Caco-2 (cell line): ENCODE measurements at regions of chr13 and their contacts with region 1.

Region 1: GRCh38 chr13:21603531-21604448 is at the start of gene MICU2:
- DNase-seq: peak; percentile 96 to 97
- H3K4me3 ChIP-seq: peak within 1 kb of the TSS; percentile 84
- H3K4me3 Mint-ChIP-seq: peak within 1 kb of the TSS; percentile 83
- H3K27ac Mint-ChIP-seq: peak within 1 kb of the TSS; percentile 76
- H3K4me1 ChIP-seq: no peaks in the 10 kb centered on the region
- H3K4me1 Mint-ChIP-seq: peaks cover 16% of the 10 kb centered on the region
- H3K27me3 ChIP-seq: no peaks in the 10 kb centered on the region
- H3K27me3 Mint-ChIP-seq: peaks cover 4% of the 10 kb centered on the region
- CTCF ChIP-seq: no peak
- total RNA-seq, gene MICU2: 43.1 and 47.6 TPM in 2 replicates

Region 2: GRCh38 chr13:21511849-21512248 is 91.9 kb before region 1 on chr13:
- CTCF ChIA-PET with region 1: no interaction called
- POLR2A ChIA-PET with region 1: no interaction called
- intact Hi-C with region 1: no loop called
- DNase-seq: no peak
- H3K4me3 ChIP-seq: no peak overlapping the region
- H3K4me3 Mint-ChIP-seq: no peak overlapping the region
- H3K27ac Mint-ChIP-seq: no peak overlapping the region
- H3K4me1 ChIP-seq: no peaks in the 10 kb centered on the region
- H3K4me1 Mint-ChIP-seq: no peaks in the 10 kb centered on the region
- H3K27me3 ChIP-seq: no peaks in the 10 kb centered on the region
- H3K27me3 Mint-ChIP-seq: no peaks in the 10 kb centered on the region
- CTCF ChIP-seq: no peak

Region 3: DNA sequence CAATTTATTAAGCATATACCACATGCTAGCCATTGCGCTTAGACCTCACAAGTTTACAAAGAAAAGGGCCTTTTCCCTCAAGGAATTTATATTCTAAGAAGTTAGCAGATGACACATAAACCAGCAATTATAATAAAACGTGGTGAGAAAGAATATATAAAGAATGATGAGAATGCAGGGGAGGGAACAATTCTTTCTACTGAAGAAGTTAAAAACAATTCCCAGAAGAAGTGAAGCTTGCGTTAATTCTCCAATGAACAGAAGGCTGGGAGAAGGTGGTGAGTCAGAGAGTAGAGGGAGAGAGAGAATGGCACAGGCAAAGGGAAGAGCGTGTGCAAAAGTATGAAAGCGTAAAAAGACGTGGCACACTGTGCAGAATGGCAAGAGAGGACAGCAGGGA is 75.2 kb before region 1 on chr13:
- CTCF ChIA-PET with region 1: no interaction called
- POLR2A ChIA-PET with region 1: interaction called, 5 read pairs
- intact Hi-C with region 1: loop called (anchors 5 kb)
- DNase-seq: no peak
- H3K4me3 ChIP-seq: no peak overlapping the region
- H3K4me3 Mint-ChIP-seq: no peak overlapping the region
- H3K27ac Mint-ChIP-seq: no peak overlapping the region
- H3K4me1 ChIP-seq: peaks cover 12% of the 10 kb centered on the region
- H3K4me1 Mint-ChIP-seq: peaks cover 19% of the 10 kb centered on the region
- H3K27me3 ChIP-seq: no peaks in the 10 kb centered on the region
- H3K27me3 Mint-ChIP-seq: no peaks in the 10 kb centered on the region
- CTCF ChIP-seq: no peak

Region 4: GRCh38 chr13:21567714-21568113 is 36.1 kb before region 1 on chr13:
- CTCF ChIA-PET with region 1: no interaction called
- POLR2A ChIA-PET with region 1: no interaction called
- intact Hi-C with region 1: no loop called
- DNase-seq: no peak
- H3K4me3 ChIP-seq: no peak overlapping the region
- H3K4me3 Mint-ChIP-seq: no peak overlapping the region
- H3K27ac Mint-ChIP-seq: no peak overlapping the region
- H3K4me1 ChIP-seq: no peaks in the 10 kb centered on the region
- H3K4me1 Mint-ChIP-seq: no peaks in the 10 kb centered on the region
- H3K27me3 ChIP-seq: no peaks in the 10 kb centered on the region
- H3K27me3 Mint-ChIP-seq: no peaks in the 10 kb centered on the region
- CTCF ChIP-seq: no peak

Region 5: DNA sequence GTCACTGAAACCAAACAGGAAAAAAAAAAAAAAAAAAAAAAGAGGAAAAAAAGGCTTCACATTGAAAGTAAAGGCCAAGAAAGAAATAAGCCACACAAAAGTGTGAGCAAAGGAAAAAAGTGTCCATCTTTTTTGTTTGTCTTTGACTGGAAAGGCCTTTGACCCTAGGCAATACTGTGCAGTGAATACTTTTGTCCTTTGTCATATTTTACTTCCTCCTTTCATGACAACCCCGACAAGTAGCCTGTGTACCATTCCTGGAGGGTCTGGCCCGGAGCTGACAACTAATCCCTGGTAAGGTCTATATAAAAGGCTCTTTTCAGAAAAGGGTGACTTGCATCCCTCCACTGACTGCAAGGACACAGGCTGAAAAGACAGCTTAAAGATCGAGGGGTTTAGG is 13.1 kb after region 1 on chr13:
- CTCF ChIA-PET with region 1: no interaction called
- POLR2A ChIA-PET with region 1: interaction called, 13 read pairs
- intact Hi-C with region 1: loop called (anchors 1 kb)
- DNase-seq: peak; percentile 49 to 59
- H3K4me3 ChIP-seq: peak overlapping the region; percentile 10; the same call in 1 of the 2 replicates
- H3K4me3 Mint-ChIP-seq: peak overlapping the region; percentile 59
- H3K27ac Mint-ChIP-seq: peak overlapping the region; percentile 50
- H3K4me1 ChIP-seq: peaks cover 37% of the 10 kb centered on the region
- H3K4me1 Mint-ChIP-seq: peaks cover 10% of the 10 kb centered on the region
- H3K27me3 ChIP-seq: no peaks in the 10 kb centered on the region
- H3K27me3 Mint-ChIP-seq: no peaks in the 10 kb centered on the region
- CTCF ChIP-seq: no peak